GM12878 (cell line): ENCODE measurements at regions of chr18 and their contacts with region 1.

Region 1: DNA sequence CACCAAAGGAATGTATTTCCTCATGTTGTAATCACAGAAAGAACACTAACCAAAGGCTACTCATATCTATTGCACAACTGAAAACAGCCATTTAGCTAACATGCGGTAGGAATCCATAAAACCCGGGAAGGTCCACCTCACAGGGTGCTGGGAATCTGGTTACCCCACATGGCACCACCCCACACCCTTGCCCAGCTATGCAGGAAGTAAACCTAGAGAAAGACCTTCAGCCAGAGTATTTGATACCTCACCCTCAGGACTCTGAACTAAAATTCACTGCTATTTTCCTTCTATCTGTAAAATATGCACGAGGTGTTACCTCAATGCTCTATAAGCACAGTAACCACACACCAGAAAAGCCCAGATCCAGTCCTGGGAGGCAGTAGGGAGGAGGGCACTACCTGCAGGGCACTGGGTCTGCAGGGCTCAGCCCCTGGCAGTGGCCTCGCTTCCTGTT is 45.8 kb downstream of the PTPN2 start:
- DNase-seq: peak; percentile 39
- ATAC-seq: peak; percentile 42
- H3K4me3 ChIP-seq: peak overlapping the region; percentile 62
- H3K27ac ChIP-seq: peak overlapping the region; percentile 95
- H3K4me1 ChIP-seq: peaks cover 31% of the 10 kb centered on the region
- H3K27me3 ChIP-seq: no peaks in the 10 kb centered on the region
- CTCF ChIP-seq: no peak
- EP300 ChIP-seq: no peak
- POLR2A ChIP-seq: no peak
- RAD21 ChIP-seq: no peak

Region 2: DNA sequence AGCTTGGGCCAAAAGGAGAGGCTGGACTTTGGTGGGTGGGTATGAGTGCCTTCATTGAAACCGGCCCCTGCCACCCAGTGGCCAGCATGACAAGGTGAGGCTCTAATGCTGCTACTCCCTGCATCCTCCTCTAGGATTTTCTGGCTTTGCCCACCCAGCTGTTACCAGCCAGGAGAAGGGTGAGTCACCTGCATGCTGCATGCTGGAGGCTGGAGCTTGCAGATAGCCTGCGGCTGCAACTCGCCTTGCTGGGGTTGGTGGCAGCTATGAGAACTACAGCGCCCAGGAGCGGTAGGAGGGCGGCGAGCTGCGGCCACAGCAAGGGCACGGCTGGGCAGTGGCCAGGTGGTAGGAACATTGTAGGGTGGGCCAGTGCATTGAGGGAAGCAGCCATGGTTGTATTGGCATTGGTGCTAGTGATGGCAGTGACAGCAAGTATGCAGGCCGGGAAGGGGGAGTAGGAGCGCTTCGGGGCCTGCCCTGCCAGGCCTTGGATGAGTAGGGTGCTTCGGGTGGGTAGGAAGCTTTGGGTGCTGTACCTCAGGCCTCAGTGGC is 1304.2 kb before region 1 on chr18:
- CTCF ChIA-PET with region 1: no interaction called
- POLR2A ChIA-PET with region 1: no interaction called
- RAD21 ChIA-PET with region 1: no interaction called
- SMC1A ChIA-PET with region 1: no interaction called
- in situ Hi-C with region 1: no loop called
- intact Hi-C with region 1: no loop called
- DNase-seq: no peak
- ATAC-seq: no peak
- H3K4me3 ChIP-seq: no peak overlapping the region
- H3K27ac ChIP-seq: no peak overlapping the region
- H3K4me1 ChIP-seq: no peaks in the 10 kb centered on the region
- H3K27me3 ChIP-seq: peaks cover 0 to 2% of the 10 kb centered on the region in 2 experiments; a peak in 1 of 4 replicates
- CTCF ChIP-seq: no peak
- EP300 ChIP-seq: no peak
- POLR2A ChIP-seq: no peak
- RAD21 ChIP-seq: no peak

Region 3: GRCh38 chr18:12668041-12668440 is 170.2 kb before region 1 on chr18:
- CTCF ChIA-PET with region 1: no interaction called
- POLR2A ChIA-PET with region 1: no interaction called
- RAD21 ChIA-PET with region 1: no interaction called
- SMC1A ChIA-PET with region 1: no interaction called
- in situ Hi-C with region 1: no loop called
- intact Hi-C with region 1: no loop called
- DNase-seq: no peak
- ATAC-seq: no peak
- H3K4me3 ChIP-seq: no peak overlapping the region
- H3K27ac ChIP-seq: no peak overlapping the region
- H3K4me1 ChIP-seq: no peaks in the 10 kb centered on the region
- H3K27me3 ChIP-seq: no peaks in the 10 kb centered on the region
- CTCF ChIP-seq: no peak
- EP300 ChIP-seq: no peak
- POLR2A ChIP-seq: no peak
- RAD21 ChIP-seq: no peak

Region 4: GRCh38 chr18:12754511-12754910 is 83.7 kb before region 1 on chr18:
- CTCF ChIA-PET with region 1: no interaction called
- POLR2A ChIA-PET with region 1: no interaction called
- RAD21 ChIA-PET with region 1: no interaction called
- SMC1A ChIA-PET with region 1: no interaction called
- in situ Hi-C with region 1: no loop called
- intact Hi-C with region 1: no loop called
- DNase-seq: no peak
- ATAC-seq: no peak
- H3K4me3 ChIP-seq: no peak overlapping the region
- H3K27ac ChIP-seq: no peak overlapping the region
- H3K4me1 ChIP-seq: peaks cover 10% of the 10 kb centered on the region
- H3K27me3 ChIP-seq: no peaks in the 10 kb centered on the region
- CTCF ChIP-seq: no peak
- EP300 ChIP-seq: no peak
- POLR2A ChIP-seq: no peak
- RAD21 ChIP-seq: no peak

Region 5: DNA sequence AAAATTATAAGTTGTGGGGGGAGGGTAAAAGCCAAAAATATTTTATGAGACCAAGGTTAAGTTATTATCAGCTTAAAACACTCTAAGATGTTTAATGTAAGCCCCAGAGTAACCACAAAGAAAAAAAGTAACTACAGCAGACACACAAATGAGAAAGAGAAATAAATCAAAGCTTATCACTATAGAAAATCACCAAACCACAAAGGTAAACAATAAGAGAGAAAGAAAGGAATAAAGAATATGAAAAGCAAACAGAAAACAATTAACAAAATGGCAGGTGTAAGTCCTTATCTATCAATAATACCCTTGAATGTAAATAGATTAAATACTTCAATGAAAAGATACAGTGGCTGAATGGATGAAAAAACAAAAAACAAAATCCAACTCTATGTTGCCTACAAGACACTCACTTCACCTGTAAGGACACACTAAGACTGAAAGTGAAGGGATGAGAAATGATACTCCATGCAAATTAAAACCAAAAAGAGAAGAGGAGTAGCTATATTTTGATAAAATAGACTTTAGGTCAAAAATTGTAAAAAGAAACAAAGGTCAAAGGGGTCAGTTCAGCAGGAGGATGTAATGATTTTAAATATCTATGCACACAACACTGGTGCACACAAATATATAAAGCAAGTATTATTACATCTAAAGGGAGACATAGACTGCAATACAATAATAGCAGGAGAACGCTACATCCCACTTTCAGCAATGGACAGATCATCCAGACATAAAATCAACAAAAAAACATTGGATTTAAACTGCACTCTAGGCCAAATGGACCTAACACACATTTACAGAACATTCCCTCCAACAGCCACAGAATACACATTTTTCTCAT is 34.9 kb before region 1 on chr18:
- CTCF ChIA-PET with region 1: interaction called, 3 read pairs
- POLR2A ChIA-PET with region 1: interaction called, 3 read pairs
- RAD21 ChIA-PET with region 1: interaction called, 3 read pairs
- SMC1A ChIA-PET with region 1: interaction called, 4 read pairs
- in situ Hi-C with region 1: no loop called
- intact Hi-C with region 1: loop called (anchors 2 kb)
- DNase-seq: peak; percentile 19
- ATAC-seq: peak; percentile 84
- H3K4me3 ChIP-seq: no peak overlapping the region
- H3K27ac ChIP-seq: peak overlapping the region; percentile 39; the same call in 1 of the 2 replicates
- H3K4me1 ChIP-seq: peaks cover 14% of the 10 kb centered on the region
- H3K27me3 ChIP-seq: no peaks in the 10 kb centered on the region
- CTCF ChIP-seq: no peak
- EP300 ChIP-seq: no peak
- POLR2A ChIP-seq: no peak
- RAD21 ChIP-seq: no peak

Region 6: DNA sequence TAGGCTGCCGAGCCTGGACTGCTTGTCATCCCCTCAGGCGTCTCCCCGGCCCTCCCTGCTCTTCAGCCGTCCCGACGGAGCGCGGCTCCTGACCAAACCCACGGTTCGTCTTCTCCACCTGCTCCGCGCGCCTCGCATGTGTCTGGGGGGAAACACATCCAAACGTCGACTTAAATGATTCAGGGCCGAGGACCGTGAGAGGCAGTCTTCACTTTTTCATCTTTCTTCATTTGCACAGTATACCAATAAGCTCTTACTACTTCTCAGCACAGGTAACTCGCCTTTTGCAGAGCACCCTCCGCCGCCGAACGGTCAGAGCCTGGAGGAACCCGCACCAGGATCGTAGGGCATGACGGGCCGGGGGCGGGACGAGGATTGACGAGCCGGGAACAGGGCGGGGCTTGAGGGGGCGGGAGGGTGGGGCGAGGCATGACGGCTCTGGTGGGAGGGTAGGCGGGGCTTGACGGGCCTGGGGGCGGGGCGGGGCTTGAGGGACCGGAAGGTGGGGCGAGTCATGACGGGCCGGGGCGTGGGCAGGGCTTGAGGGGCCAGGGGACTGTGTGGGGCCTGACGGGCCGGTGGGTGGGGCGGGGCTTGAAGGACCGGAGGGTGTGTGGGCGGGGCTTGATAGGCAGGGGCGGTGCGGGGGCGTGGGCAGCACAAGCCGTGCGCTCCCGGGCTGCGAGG is 109.3 kb after region 1 on chr18 and contains the start of gene SEH1L:
- CTCF ChIA-PET with region 1: no interaction called
- POLR2A ChIA-PET with region 1: no interaction called
- RAD21 ChIA-PET with region 1: no interaction called
- SMC1A ChIA-PET with region 1: no interaction called
- in situ Hi-C with region 1: no loop called
- intact Hi-C with region 1: loop called (anchors 5 kb)
- DNase-seq: peak; percentile 89
- ATAC-seq: peak; percentile 92
- H3K4me3 ChIP-seq: peak within 1 kb of the TSS; percentile 92
- H3K27ac ChIP-seq: peak within 1 kb of the TSS; percentile 87
- H3K4me1 ChIP-seq: peaks cover 4% of the 10 kb centered on the region; the same call in 1 of the 2 replicates
- H3K27me3 ChIP-seq: no peaks in the 10 kb centered on the region
- CTCF ChIP-seq: no peak
- EP300 ChIP-seq: no peak
- POLR2A ChIP-seq: 0 out of 2 replicates have a peak, but pooled peaks have one; percentile 7
- RAD21 ChIP-seq: no peak
- polyA plus RNA-seq, gene SEH1L: 27.5 to 52.4 TPM

Region 7: DNA sequence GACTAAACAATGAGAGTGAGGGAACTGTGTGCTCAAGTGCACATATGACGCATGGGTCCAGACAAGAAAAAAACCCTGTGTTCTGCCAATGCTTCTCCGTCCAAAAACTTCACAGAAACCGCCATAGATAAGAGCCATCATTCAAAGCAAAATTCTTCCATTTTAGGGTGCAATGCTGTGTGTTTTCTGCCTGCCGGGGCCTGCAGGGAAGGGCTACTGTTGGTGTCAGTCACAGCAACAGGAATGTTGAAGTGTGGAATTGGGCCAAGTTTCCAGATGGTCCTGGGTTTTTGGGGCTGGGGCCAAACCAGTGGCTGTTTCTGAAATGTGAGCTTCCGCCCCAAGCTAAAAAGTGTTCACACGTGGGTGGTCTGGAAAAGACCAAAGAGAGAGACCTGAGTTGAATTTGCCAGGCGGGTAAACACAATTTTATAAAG is 1077.8 kb after region 1 on chr18:
- CTCF ChIA-PET with region 1: no interaction called
- POLR2A ChIA-PET with region 1: no interaction called
- RAD21 ChIA-PET with region 1: no interaction called
- SMC1A ChIA-PET with region 1: no interaction called
- in situ Hi-C with region 1: no loop called
- intact Hi-C with region 1: no loop called
- DNase-seq: no peak
- ATAC-seq: no peak
- H3K4me3 ChIP-seq: no peak overlapping the region
- H3K27ac ChIP-seq: no peak overlapping the region
- H3K4me1 ChIP-seq: no peaks in the 10 kb centered on the region
- H3K27me3 ChIP-seq: peaks cover 0 to 2% of the 10 kb centered on the region in 2 experiments; a peak in 3 of 4 replicates
- CTCF ChIP-seq: no peak
- EP300 ChIP-seq: no peak
- POLR2A ChIP-seq: no peak
- RAD21 ChIP-seq: no peak